ENCODE measurements at regions of chr17 and their contacts with region 1.

Region 1: GRCh38 chr17:82781894-82782274 is 30.0 kb downstream of the TBCD start:
- DNase-seq: peak; percentile 19 to 90
- H3K4me3 ChIP-seq: no peak overlapping the region
- H3K27ac ChIP-seq: no peak overlapping the region
- H3K4me1 ChIP-seq: peaks cover 0 to 4% (median 1%) of the 10 kb centered on the region in 4 experiments; a peak in 2 of 7 replicates
- H3K27me3 ChIP-seq: no peaks in the 10 kb centered on the region
- CTCF ChIP-seq: peak; percentile 90 to 96 (median 95)
- EP300 ChIP-seq: no peak
- POLR2A ChIP-seq: no peak
- RAD21 ChIP-seq: peak; percentile 91 to 92

Region 2: DNA sequence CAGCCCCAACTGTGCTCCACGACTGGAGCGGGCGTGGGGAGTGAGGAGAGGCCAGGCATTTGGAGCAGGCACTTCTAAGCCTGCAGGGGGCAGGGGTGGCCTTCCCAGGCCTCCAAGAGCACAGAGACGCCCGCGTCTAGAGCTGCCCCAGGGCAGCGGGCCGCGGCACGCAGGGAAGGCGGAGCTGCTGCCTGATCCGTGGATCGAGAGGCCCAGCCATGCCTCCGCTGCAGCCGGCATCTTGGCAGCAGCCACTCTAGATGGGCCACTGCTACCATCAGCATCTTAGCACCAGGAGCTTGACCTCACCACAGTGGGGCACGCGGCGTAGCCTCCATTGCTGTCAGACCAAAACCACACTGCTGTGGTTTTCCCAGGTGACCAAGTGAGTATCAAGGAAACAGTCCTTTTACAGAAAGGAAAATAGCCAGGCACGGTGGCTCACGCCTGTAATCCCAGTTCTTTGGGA is 113.2 kb before region 1 on chr17:
- CTCF ChIA-PET with region 1: interaction called, 10 read pairs
- POLR2A ChIA-PET with region 1: no interaction called
- DNase-seq: peak; percentile 53 to 78
- H3K4me3 ChIP-seq: peak overlapping the region in 1 of 4 experiments; percentile 25; a peak in 1 of 8 replicates
- H3K27ac ChIP-seq: no peak overlapping the region
- H3K4me1 ChIP-seq: peaks cover 0 to 9% (median 2%) of the 10 kb centered on the region in 4 experiments; a peak in 3 of 7 replicates
- H3K27me3 ChIP-seq: no peaks in the 10 kb centered on the region; a peak in 2 of 7 replicates
- CTCF ChIP-seq: peak; percentile 78 to 88 (median 81)
- EP300 ChIP-seq: no peak
- POLR2A ChIP-seq: no peak
- RAD21 ChIP-seq: peak; percentile 78 to 85

Region 3: DNA sequence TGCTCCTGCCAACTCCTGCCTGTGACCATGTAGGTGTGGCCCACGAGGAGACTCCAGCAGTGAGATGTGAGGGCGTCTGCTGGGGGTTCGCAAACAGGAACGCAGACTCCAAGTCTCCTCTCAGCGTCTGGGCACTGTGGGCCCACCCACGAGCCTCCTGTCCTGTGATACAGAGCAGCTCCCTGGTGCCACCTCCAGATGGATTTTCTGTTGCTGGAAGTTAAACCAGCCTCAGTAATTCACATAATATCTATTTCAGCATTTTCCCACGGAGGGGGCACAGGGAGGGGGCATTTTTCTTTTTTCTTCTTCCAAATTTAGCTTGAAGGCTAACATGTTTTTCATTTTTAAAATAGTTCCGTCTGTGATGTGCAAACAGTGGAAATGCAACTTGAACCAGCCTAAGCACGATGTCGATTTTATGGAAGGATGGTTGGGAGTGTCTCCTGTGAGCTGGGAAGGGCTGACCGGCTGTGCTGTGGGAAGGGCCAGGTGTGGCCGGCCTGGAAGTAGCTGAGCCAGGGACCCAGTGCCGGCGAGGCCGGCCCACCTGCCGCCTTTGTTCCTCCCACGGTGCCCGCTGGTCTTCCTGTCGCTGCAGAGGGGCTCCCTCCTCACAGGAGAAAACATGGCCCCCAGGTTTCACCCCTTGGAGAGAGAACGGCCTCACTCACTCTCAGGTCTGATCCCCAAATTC is 79.5 kb before region 1 on chr17:
- CTCF ChIA-PET with region 1: no interaction called
- POLR2A ChIA-PET with region 1: no interaction called
- DNase-seq: no peak
- H3K4me3 ChIP-seq: no peak overlapping the region
- H3K27ac ChIP-seq: no peak overlapping the region
- H3K4me1 ChIP-seq: peaks cover 0 to 7% (median 2%) of the 10 kb centered on the region in 4 experiments; a peak in 3 of 7 replicates
- H3K27me3 ChIP-seq: peaks cover 7 to 20% (median 11%) of the 10 kb centered on the region in 4 experiments
- CTCF ChIP-seq: no peak
- EP300 ChIP-seq: no peak
- POLR2A ChIP-seq: no peak
- RAD21 ChIP-seq: no peak

Region 4: GRCh38 chr17:82793974-82794630 is 12.2 kb after region 1 on chr17:
- CTCF ChIA-PET with region 1: interaction called, 10 read pairs
- POLR2A ChIA-PET with region 1: no interaction called
- DNase-seq: no peak
- H3K4me3 ChIP-seq: no peak overlapping the region
- H3K27ac ChIP-seq: no peak overlapping the region
- H3K4me1 ChIP-seq: no peaks in the 10 kb centered on the region
- H3K27me3 ChIP-seq: no peaks in the 10 kb centered on the region
- CTCF ChIP-seq: no peak
- EP300 ChIP-seq: no peak
- POLR2A ChIP-seq: no peak
- RAD21 ChIP-seq: no peak

Region 5: GRCh38 chr17:82836823-82837357 is 55.0 kb after region 1 on chr17:
- CTCF ChIA-PET with region 1: interaction called, 20 read pairs
- POLR2A ChIA-PET with region 1: no interaction called
- DNase-seq: no peak
- H3K4me3 ChIP-seq: no peak overlapping the region
- H3K27ac ChIP-seq: no peak overlapping the region
- H3K4me1 ChIP-seq: peaks cover 4 to 18% (median 11%) of the 10 kb centered on the region in 4 experiments; a peak in 5 of 7 replicates
- H3K27me3 ChIP-seq: no peaks in the 10 kb centered on the region
- CTCF ChIP-seq: peak in 2 of 3 experiments; percentile 23 to 27; a peak in 3 of 4 replicates
- EP300 ChIP-seq: no peak
- POLR2A ChIP-seq: no peak
- RAD21 ChIP-seq: no peak

Region 6: DNA sequence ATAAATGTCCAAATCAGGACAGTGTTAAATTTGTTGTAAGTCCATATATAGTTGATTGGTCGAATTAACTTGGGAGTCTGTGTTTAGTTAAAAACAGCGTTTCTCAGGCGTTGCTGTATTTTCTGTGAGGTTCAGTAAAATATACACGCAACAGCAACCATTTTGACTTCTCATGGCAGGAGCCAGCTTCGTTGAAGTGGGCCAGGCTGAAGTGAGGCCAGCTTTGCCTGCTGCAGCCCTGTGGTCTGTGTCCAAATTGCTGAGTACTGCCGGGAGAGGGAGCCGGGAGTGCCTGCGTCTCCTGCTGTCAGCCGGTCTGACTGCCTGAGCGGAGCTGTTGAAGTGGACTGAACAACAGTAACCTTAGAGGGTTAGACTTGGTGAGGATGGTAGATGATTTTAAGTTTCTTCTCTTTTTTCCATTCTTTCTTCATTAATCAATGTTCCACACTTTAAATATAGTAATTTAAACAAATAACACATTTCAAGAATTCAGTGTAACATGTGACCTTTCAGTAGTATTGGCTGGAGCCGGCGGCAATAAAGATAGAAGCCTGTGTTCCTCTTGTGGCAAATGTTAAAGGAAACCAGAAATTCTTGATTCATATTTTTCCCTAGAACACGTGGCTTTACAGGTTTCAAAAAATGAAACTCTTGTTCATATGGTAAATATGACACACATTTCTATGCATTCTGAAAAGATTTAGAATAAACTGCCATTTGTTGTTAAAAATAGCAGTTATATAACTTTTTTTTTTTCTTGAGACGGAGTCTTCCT is 94.9 kb after region 1 on chr17:
- CTCF ChIA-PET with region 1: interaction called, 11 read pairs
- POLR2A ChIA-PET with region 1: no interaction called
- DNase-seq: no peak
- H3K4me3 ChIP-seq: no peak overlapping the region
- H3K27ac ChIP-seq: no peak overlapping the region
- H3K4me1 ChIP-seq: peaks cover 0 to 11% (median 3%) of the 10 kb centered on the region in 4 experiments; a peak in 5 of 7 replicates
- H3K27me3 ChIP-seq: no peaks in the 10 kb centered on the region
- CTCF ChIP-seq: peak in 2 of 3 experiments; percentile 17 to 32; a peak in 3 of 4 replicates
- EP300 ChIP-seq: no peak
- POLR2A ChIP-seq: no peak
- RAD21 ChIP-seq: 0 out of 4 replicates have a peak, but pooled peaks of 1 of the 2 experiments have one; percentile 15

Region 7: GRCh38 chr17:82924798-82925197 is 142.9 kb after region 1 on chr17:
- CTCF ChIA-PET with region 1: interaction called, 11 read pairs
- POLR2A ChIA-PET with region 1: no interaction called
- DNase-seq: no peak
- H3K4me3 ChIP-seq: no peak overlapping the region
- H3K27ac ChIP-seq: no peak overlapping the region
- H3K4me1 ChIP-seq: no peaks in the 10 kb centered on the region
- H3K27me3 ChIP-seq: no peaks in the 10 kb centered on the region
- CTCF ChIP-seq: 0 out of 4 replicates have a peak, but pooled peaks of 1 of the 3 experiments have one; percentile 1
- EP300 ChIP-seq: no peak
- POLR2A ChIP-seq: no peak
- RAD21 ChIP-seq: no peak

Measured in H1 (cell line).